H1 (cell line): ENCODE measurements at regions of chr14 and their contacts with region 1.

Region 1: GRCh38 chr14:65423982-65424381 is 11.5 kb downstream of the FUT8 start:
- DNase-seq: no peak
- H3K4me3 ChIP-seq: no peak overlapping the region
- H3K27ac ChIP-seq: no peak overlapping the region
- H3K4me1 ChIP-seq: peaks cover 0 to 3% (median 2%) of the 10 kb centered on the region in 4 experiments; a peak in 3 of 7 replicates
- H3K27me3 ChIP-seq: no peaks in the 10 kb centered on the region
- CTCF ChIP-seq: no peak
- EP300 ChIP-seq: no peak
- POLR2A ChIP-seq: no peak
- RAD21 ChIP-seq: no peak

Region 2: DNA sequence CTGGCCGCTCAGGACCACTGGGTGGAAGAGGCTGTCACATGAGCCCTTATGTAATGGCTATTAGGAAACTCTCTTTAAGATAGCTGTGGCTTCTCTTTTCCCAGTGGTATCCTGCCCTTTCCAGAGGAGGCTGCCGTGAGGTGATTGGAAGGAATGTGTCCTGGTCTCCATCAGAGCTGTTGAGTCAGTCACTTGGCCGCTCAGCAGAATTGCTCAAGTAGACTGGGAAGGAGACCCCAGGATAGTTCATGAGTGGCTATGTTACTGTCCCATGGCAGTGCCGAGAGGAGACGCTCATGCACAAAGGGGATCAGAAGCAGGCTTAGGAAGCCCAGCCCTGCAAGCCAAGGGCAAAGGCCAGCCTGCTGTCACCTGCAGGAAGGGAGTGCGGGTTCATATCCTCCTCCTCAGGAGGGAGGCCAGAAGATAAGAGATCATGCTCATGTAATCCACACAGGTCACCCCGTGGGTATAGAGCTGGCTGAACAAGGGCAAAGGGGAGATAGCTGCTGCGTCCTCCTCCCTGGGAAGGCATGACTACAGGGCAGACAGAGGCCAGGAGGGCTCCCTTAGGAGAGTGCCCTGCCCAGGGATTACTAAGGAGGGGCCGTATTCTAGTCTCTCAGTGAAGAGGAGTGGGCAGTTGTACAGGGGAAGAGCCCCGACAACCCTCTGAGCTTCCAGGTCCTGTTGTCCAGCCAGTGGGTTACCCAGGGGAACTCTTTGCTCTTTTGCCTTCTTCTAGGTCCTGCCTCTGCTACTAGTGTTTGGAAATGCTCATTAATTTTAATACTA is 184.6 kb before region 1 on chr14:
- CTCF ChIA-PET with region 1: no interaction called
- POLR2A ChIA-PET with region 1: no interaction called
- DNase-seq: no peak
- H3K4me3 ChIP-seq: no peak overlapping the region
- H3K27ac ChIP-seq: no peak overlapping the region
- H3K4me1 ChIP-seq: peaks cover 0 to 13% (median 3%) of the 10 kb centered on the region in 4 experiments; a peak in 6 of 7 replicates
- H3K27me3 ChIP-seq: no peaks in the 10 kb centered on the region
- CTCF ChIP-seq: no peak
- EP300 ChIP-seq: no peak
- POLR2A ChIP-seq: no peak
- RAD21 ChIP-seq: no peak

Region 3: DNA sequence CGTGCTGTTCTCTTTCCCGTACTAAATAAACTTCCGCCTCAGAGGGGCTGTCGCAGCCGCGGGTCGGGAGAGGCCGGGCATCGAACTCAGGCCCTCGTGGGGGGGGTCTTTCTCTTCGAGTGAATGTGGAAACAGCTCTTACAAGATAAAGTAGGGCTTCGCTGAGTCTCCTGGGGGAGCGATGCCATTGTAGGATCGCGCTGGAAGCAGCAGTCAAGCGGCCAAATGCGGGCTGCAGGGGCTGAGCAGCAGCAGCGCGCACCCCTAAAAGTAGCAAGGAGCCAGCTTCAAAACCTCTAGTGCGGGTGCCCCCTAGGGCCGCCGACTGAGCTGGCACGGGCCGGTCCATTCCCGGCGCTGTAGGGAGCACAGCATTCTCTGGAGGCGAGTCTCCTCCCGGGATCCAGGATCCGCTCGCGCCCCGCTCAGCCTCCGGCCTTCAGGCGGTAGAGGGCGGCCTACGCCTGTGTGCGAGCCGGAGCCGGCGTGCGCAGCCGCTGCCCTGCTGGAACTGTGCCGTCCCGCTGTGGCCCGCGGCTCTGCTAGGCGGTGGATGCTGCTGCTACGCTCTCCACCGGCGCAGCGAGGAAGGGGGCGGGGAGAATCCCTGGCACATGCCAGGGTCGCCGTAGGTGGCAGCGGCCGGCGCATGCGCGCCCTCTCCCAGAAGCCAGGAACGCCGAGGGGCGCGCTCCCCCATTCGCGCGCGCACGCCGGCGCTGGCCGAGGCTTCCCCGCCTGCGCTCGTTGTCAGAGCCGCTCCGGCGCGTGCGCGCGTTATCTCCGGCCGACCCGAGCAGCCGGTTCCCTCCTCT is 11.7 kb before region 1 on chr14 and contains the start of gene FUT8:
- CTCF ChIA-PET with region 1: interaction called, 10 read pairs
- POLR2A ChIA-PET with region 1: interaction called, 5 read pairs
- DNase-seq: peak; percentile 93 to 96
- H3K4me3 ChIP-seq: peak within 1 kb of the TSS; percentile 71 to 85 (median 77)
- H3K27ac ChIP-seq: peak within 1 kb of the TSS; percentile 73
- H3K4me1 ChIP-seq: peaks cover 0 to 5% (median 0%) of the 10 kb centered on the region in 4 experiments; a peak in 1 of 7 replicates
- H3K27me3 ChIP-seq: no peaks in the 10 kb centered on the region; a peak in 1 of 7 replicates
- CTCF ChIP-seq: peak; percentile 64 to 78 (median 67)
- EP300 ChIP-seq: peak; percentile 5 to 73; a peak in 2 of 3 replicates
- POLR2A ChIP-seq: peak in 1 of 2 experiments; percentile 76; a peak in 2 of 3 replicates
- RAD21 ChIP-seq: peak; percentile 79 to 85
- total RNA-seq, gene FUT8: 25.1 and 25.3 TPM in 2 replicates